Psoas muscle (tissue), 8 donors: ENCODE measurements at regions of chr19 and their contacts with region 1.

Region 1: GRCh38 chr19:17469481-17470067 is 750 bp upstream of the SLC27A1 start:
- DNase-seq: peak; percentile 95 to 98
- ATAC-seq: peak; percentile 75 to 81 (median 76)
- H3K4me3 ChIP-seq: peak overlapping the region; percentile 88
- H3K27ac ChIP-seq: peak overlapping the region; percentile 93
- H3K4me1 ChIP-seq: peaks cover 35% of the 10 kb centered on the region
- H3K27me3 ChIP-seq: no peaks in the 10 kb centered on the region
- CTCF ChIP-seq: no peak

Region 2: GRCh38 chr19:17346109-17346671 is 123.4 kb before region 1 on chr19:
- intact Hi-C with region 1: loop called (anchors 5 kb)
- DNase-seq: peak; percentile 77 to 85
- ATAC-seq: peak; percentile 78 to 94 (median 86)
- H3K4me3 ChIP-seq: no peak overlapping the region
- H3K27ac ChIP-seq: peak overlapping the region; percentile 65
- H3K4me1 ChIP-seq: peaks cover 26% of the 10 kb centered on the region
- H3K27me3 ChIP-seq: no peaks in the 10 kb centered on the region
- CTCF ChIP-seq: peak; percentile 98

Region 3: DNA sequence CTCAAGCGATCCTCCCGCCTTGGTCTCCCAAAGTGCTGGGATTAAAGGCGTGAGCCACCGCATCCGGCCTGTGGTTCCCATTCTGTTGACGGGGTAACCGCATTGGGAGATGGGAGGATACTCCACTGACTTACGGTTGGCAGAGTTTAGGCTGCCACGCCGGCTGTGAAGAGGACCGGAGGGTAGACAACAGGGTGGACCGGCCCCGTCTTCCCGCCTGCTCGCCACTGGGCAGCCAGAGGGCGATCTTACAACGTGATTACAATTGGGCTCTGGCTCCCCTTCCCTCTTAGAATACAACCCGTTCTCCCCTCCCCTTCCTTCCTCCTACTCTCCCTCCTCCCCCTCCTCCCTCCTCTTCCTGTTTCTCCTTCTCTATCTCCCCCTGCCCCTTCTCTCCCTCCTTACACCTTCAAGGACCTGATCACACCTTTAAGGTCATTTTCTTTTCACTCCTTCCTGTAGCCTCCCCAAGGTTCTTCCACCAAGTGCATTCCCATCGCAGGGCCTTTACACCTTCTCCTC is 74.6 kb before region 1 on chr19:
- intact Hi-C with region 1: loop called in 1 of 2 experiments (anchors 2 kb)
- DNase-seq: peak; percentile 71 to 78
- ATAC-seq: peak in 2 of 4 donors; percentile 26 to 43
- H3K4me3 ChIP-seq: no peak overlapping the region
- H3K27ac ChIP-seq: no peak overlapping the region
- H3K4me1 ChIP-seq: peaks cover 5% of the 10 kb centered on the region
- H3K27me3 ChIP-seq: peaks cover 0 to 40% (median 11%) of the 10 kb centered on the region in 3 donors
- CTCF ChIP-seq: peak; percentile 63

Region 4: DNA sequence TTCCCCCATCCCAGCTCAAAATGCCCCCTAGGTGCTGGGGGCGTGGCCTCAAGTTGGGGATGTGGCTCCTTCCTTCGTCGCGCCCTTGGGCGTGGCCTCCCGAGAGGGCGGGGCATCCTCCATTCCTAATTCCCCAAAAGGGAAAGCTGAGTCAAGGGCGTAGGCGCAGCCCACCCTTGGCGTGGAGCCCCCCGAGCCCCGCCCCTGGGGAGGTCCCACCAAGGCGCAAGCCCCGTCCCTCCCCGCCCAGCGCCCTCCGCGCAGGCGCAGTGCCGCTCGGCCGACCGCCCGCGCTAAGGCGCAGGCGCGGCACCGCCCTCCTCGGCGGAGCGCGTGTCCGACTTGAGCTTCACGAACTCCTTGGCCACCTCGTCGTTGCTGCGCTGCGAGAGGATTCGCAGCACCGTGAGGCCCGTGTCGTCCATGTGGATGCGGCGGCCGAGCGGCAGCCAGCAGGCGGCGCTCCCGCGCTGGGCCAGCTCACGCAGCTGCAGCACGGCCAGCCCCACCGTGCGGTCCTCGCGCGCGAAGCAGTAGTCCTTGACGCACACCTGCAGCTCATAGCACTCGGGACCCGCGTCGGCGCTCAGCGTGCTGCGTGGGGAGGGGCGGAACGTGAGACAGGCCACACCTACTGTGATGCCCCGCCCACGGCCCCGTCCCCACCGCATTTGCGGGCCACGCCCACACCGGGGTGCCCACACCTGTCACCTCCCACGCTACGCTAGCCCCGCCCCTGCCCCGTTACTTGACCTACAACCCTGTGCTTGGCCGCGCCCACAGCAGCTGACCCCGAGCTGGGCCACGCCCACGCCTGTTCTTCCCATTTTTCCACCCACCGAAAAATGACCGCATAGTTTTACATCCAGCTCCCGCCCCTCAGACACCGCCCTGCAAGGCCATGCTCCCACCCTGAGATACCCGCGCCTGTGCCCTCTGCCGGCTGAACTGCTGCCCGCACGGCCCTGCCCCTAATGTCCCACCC is 136.5 kb after region 1 on chr19:
- intact Hi-C with region 1: no loop called
- DNase-seq: peak; percentile 69 to 74
- ATAC-seq: peak; percentile 49 to 68 (median 62)
- H3K4me3 ChIP-seq: peak overlapping the region; percentile 52
- H3K27ac ChIP-seq: no peak overlapping the region
- H3K4me1 ChIP-seq: peaks cover 4% of the 10 kb centered on the region
- H3K27me3 ChIP-seq: peaks cover 0 to 58% (median 13%) of the 10 kb centered on the region in 3 donors
- CTCF ChIP-seq: peak; percentile 48